CD8-positive, alpha-beta memory T cell (primary cell): ENCODE measurements at regions of chr1 and their contacts with region 1.

Region 1: DNA sequence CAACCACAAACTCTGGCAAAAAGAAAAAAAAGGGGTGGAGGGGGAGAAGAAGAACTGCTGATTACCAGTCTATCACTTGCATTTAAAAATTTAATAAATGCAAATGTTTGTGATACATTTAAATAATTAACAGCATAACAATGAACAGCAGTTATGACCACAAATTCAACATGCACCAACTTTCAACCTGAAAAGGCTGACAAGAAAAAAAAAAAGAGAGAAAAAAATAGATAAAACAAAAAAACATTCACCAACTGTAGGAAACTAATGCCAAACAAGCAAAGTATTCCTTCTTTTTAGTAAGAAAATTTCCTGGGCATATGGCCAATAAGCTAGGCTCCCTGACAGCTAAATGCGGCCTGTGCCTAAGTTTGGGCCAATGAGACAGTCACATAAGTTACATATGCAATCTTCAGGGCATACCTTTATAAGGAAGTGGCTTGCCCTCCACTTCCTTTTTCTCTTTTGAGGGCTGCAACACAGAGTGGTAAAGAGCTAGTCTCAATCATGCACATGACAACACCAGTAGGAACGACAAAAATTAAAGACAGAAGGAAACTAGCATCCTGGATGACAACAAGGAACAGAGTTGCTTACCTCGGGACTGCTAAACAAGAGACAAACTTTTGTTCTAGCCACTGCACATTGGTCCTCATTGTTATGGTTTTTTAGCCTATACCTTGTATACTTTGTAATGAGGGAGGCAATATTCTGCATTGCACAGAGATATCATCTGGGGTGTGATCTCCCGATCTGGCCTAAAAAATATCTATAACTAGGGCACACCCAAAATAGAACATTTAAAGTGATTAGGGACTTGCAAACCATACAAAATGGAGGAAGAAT is 24.2 kb upstream of the PHTF1 start:
- DNase-seq: peak; percentile 25 to 71 (median 69)
- H3K4me3 ChIP-seq: peak overlapping the region; percentile 11
- H3K4me3 Mint-ChIP-seq: peak overlapping the region; percentile 13 to 74 (median 64)
- H3K27ac ChIP-seq: peak overlapping the region; percentile 52
- H3K27ac Mint-ChIP-seq: no peak overlapping the region
- H3K4me1 ChIP-seq: peaks cover 84% of the 10 kb centered on the region
- H3K4me1 Mint-ChIP-seq: peaks cover 33 to 38% (median 35%) of the 10 kb centered on the region in 3 donors
- H3K27me3 ChIP-seq: no peaks in the 10 kb centered on the region
- H3K27me3 Mint-ChIP-seq: no peaks in the 10 kb centered on the region

Region 2: DNA sequence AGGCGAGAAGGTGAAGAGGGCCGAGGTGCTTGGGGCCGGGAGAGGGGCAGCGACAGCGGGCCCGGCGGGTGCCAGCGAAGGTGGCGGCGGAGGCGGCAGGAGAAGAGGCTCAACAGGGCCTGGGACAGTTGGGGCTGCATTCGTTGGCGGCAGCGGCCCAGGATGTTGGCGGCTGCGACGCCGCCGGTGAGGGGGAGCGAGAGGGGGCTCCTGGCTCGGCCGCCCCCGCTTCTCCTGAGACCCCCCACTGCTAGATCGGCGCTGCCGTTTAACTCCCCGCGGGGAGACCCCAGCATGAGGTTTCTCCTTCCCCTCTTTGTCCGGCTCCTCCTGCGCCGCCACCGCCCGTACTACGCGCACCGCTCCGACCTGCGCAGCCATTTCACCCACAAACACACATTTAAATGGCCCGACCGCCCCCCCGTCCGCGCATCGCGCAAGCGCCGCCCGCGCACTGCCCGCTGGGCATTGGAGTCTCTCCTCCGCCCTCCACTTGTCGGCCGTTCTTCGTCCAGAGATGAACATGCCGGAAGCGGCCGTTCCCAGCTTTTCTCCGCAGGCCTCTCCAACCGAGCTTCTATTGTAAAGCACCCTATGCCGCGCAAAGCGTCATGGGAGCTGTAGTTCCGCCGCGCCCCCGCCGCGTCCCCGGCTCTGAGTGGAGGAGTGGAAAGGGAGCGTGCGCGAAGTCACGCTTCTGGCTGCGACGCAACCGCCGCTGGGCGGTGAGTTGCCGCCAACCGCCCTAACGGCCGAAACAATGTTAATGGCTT is 28.6 kb after region 1 on chr1 and contains the start of gene RSBN1:
- CTCF ChIA-PET with region 1: interaction called, 4 read pairs
- POLR2A ChIA-PET with region 1: interaction called, 22 read pairs
- DNase-seq: peak; percentile 96 to 99 (median 98)
- H3K4me3 ChIP-seq: peak within 1 kb of the TSS; percentile 72
- H3K4me3 Mint-ChIP-seq: peak within 1 kb of the TSS; percentile 94 to 100 (median 97)
- H3K27ac ChIP-seq: peak within 1 kb of the TSS; percentile 89
- H3K27ac Mint-ChIP-seq: peak within 1 kb of the TSS; percentile 94 to 98 (median 96)
- H3K4me1 ChIP-seq: peaks cover 34% of the 10 kb centered on the region
- H3K4me1 Mint-ChIP-seq: peaks cover 33 to 52% (median 49%) of the 10 kb centered on the region in 3 donors
- H3K27me3 ChIP-seq: no peaks in the 10 kb centered on the region
- H3K27me3 Mint-ChIP-seq: no peaks in the 10 kb centered on the region
- total RNA-seq, gene RSBN1: 18.5 to 19.2 TPM